ENCODE measurements at regions of chr9 and their contacts with region 1.

Region 1: DNA sequence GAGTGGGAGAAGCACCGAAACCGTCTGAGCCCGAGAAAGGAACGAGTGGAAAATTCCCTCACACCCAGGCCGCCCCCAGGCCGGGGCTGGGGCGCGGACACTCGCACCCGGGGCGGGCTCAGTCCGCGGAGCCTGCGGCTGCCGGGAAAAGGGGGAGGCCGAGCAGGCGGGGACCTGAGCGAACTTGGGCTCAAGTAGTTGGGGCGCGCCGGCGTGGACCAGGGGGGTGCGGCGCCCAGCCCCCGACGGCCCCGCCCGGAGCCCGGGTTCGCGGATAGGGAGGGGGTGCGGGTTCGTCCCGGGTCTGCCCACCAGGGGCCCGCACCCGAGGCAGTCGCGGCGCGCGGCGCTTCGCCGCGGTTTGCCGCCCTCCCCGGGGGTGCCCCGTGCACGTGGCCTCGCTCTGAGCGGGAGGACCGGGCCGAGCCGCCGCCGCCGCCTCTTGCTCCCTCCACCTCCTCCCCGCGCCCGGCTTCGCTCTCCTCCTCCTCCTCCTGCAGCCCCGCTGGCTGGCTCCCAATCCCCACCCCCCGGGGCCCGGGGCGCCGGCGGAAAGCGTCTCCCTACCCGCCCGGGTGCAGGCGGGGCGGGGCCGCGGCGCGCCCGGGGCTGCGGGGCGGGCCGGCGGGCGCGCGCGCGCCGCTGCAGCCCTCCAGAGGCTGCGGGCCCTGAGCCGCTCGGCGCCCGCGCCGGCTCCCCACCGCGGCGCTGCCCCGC is 1.1 kb upstream of the NFIB start:
- DNase-seq: no peak
- H3K4me3 ChIP-seq: peak overlapping the region; percentile 75 to 86
- H3K27ac ChIP-seq: peak overlapping the region; percentile 96
- H3K4me1 ChIP-seq: peaks cover 64% of the 10 kb centered on the region
- H3K27me3 ChIP-seq: no peaks in the 10 kb centered on the region
- CTCF ChIP-seq: no peak
- POLR2A ChIP-seq: peak in 1 of 2 donors; percentile 45

Region 2: GRCh38 chr9:14096258-14096922 is 218.7 kb before region 1 on chr9:
- intact Hi-C with region 1: loop called (anchors 10 kb)
- DNase-seq: no peak
- H3K4me3 ChIP-seq: peak overlapping the region; percentile 15 to 20
- H3K27ac ChIP-seq: peak overlapping the region; percentile 50
- H3K4me1 ChIP-seq: peaks cover 38% of the 10 kb centered on the region
- H3K27me3 ChIP-seq: no peaks in the 10 kb centered on the region
- CTCF ChIP-seq: no peak
- POLR2A ChIP-seq: no peak

Region 3: DNA sequence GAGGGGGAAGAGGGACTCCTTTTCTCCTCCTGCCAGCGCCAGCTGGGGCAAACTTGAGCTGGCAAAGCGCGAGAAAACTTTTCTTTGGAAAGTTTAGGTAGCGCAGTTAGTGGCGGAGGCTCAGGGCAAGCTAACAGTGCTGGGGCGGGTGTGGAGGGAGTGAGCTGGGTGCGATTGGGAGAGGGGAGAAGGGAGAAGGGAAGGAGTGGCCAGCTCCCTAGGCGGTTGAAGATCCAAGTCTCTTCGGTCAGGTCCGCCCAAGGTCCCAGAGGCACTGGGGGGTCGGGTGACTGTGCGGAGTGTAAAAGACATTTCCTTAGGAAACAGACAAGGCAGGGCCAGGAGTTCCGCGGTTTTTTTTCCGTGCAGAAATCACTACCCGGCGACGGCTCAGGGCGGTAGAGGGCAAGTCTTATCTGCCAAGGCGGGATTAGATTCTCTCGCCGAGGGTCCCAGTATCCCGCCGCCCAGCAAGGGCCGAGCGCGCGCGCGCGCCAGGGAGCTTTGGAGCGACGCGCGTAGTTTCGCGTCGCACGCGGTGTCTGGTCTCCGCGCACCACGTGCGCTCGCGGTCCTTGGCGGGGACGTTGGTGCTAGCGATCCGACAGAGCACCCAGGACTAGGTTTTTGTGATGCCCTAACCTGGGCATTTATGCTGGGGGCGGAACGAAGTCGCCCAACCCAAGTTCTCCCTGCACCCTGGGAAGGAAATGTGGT is 32.5 kb after region 1 on chr9:
- intact Hi-C with region 1: loop called (anchors 2 kb)
- DNase-seq: no peak
- H3K4me3 ChIP-seq: peak overlapping the region; percentile 42 to 50
- H3K27ac ChIP-seq: peak overlapping the region; percentile 59
- H3K4me1 ChIP-seq: peaks cover 46% of the 10 kb centered on the region
- H3K27me3 ChIP-seq: peaks cover 5% of the 10 kb centered on the region
- CTCF ChIP-seq: no peak
- POLR2A ChIP-seq: no peak

Measured in vagina (tissue), 2 donors.